Activated T-helper 1 cell treated with anti-CD3 and anti-CD28 coated beads, Interleukin-12 subunit alpha, Interleukin-12 subunit beta, Interleukin-2, Interleukin-4 antibody, amounts not matched to agents 30 ng/mL and 10 ng/mL and 1 ng/mL, durations not matched to agents 14 hours and 24 hours and 36 hours (primary cell): ENCODE measurements at regions of chr6 and their contacts with region 1.

Region 1: DNA sequence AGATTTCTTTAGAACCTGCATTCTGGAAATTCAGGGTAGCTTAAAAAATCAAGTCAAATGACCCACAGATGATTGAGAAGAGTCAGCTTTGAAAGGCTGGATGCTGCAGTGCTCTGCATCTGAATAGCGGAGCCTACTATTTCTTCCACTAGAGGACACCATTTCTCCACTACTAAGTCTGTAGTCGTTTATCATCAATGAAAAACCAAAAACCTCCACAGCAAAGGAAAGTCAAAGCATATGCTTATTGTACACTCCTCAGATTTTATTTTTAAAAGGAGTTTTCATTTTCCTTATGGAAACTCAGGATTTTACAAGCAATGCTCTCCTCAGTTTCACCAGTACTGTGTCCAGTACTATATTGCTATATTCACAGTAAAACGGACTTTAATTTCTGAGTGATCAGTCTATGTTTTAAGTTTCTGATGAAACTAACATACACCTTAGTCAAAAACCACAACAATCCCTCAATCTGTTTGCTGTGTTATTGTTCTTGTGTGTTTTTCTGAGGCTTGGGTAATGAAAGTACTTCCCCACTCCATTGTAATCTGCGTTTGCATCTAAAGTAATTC is 50.5 kb upstream of the ENPP5 start:
- DNase-seq: no peak
- H3K4me3 Mint-ChIP-seq: no peak overlapping the region
- H3K27ac Mint-ChIP-seq: no peak overlapping the region
- H3K4me1 Mint-ChIP-seq: peaks cover 11% of the 10 kb centered on the region
- H3K27me3 Mint-ChIP-seq: peaks cover 6% of the 10 kb centered on the region

Region 2: GRCh38 chr6:44494011-44494501 is 1727.3 kb before region 1 on chr6:
- intact Hi-C with region 1: no loop called
- DNase-seq: no peak
- H3K4me3 Mint-ChIP-seq: no peak overlapping the region
- H3K27ac Mint-ChIP-seq: no peak overlapping the region
- H3K4me1 Mint-ChIP-seq: no peaks in the 10 kb centered on the region
- H3K27me3 Mint-ChIP-seq: peaks cover 2% of the 10 kb centered on the region

Region 3: DNA sequence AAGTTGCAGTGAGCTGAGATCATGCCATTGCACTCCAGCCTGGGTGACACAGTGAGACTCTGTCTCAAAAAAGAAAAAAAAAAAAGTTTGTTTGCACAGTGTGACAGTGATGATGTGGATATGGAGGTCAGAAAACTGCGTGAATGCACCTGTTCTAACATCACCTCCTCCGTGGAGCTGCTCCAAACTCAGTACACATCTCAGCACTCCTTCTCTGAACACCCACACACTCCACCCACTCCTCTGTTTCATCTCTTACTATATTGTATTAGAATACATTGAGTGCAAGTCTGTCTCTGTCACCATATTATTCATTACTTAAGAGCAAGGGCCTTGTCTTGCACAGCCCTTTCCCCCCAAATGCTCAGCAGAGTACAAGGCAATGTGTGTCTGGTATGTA is 143.0 kb before region 1 on chr6:
- intact Hi-C with region 1: no loop called
- DNase-seq: no peak
- H3K4me3 Mint-ChIP-seq: no peak overlapping the region
- H3K27ac Mint-ChIP-seq: no peak overlapping the region
- H3K4me1 Mint-ChIP-seq: peaks cover 5% of the 10 kb centered on the region
- H3K27me3 Mint-ChIP-seq: peaks cover 4% of the 10 kb centered on the region

Region 4: DNA sequence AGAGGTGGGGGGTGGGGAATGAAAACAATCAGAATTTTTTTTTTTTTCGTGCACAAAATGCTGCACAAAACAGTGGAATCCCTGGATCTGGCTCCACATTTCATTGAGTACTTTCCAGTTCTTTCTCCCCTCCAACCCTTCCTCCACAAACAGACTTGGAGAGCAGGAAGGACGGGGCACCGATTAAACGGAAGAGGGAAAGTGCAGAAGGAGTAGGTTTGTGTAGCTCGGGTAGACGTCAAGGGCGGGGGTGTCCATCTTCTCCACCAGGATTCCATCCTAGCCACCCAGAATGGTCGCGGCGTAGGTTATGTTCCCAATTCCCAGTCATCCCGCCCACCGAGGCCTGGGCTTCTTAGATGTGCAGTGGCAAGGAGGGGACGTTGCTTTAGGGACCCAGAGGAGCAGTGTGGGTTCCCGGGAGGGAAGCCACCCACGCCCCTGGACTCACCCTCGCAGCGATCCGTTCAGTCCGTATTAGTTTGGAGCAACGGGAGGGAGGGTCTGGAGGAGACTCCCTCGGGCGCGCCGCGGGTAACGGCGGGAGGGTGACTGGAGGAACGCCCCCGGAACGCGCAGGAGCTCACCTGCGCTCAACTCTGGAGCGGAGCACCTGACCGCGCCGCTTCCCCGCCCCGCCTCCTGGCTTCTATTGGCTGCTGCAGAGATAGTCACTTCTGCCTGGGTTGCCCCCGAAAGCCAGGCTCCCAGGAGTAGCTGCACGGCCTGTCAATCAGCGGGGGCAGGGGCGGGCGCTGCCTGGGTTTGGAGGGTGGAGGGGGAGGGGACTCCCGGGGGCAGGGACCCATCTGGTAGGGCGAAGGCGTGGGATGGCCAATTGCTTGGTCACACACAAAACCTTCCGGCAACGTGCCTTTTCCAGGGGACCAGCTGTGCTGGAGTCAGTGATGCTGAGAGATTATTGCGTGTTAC is 50.7 kb before region 1 on chr6 and contains the start of gene ENPP5:
- intact Hi-C with region 1: loop called (anchors 1 kb)
- DNase-seq: no peak
- H3K4me3 Mint-ChIP-seq: peak within 1 kb of the TSS; percentile 67
- H3K27ac Mint-ChIP-seq: no peak within 1 kb of the TSS
- H3K4me1 Mint-ChIP-seq: peaks cover 27% of the 10 kb centered on the region
- H3K27me3 Mint-ChIP-seq: peaks cover 71% of the 10 kb centered on the region
- total RNA-seq, gene ENPP5: not detected in 2 replicates

Region 5: GRCh38 chr6:46199387-46199786 is 21.9 kb before region 1 on chr6:
- intact Hi-C with region 1: no loop called
- DNase-seq: no peak
- H3K4me3 Mint-ChIP-seq: no peak overlapping the region
- H3K27ac Mint-ChIP-seq: no peak overlapping the region
- H3K4me1 Mint-ChIP-seq: no peaks in the 10 kb centered on the region
- H3K27me3 Mint-ChIP-seq: peaks cover 9% of the 10 kb centered on the region

Region 6: DNA sequence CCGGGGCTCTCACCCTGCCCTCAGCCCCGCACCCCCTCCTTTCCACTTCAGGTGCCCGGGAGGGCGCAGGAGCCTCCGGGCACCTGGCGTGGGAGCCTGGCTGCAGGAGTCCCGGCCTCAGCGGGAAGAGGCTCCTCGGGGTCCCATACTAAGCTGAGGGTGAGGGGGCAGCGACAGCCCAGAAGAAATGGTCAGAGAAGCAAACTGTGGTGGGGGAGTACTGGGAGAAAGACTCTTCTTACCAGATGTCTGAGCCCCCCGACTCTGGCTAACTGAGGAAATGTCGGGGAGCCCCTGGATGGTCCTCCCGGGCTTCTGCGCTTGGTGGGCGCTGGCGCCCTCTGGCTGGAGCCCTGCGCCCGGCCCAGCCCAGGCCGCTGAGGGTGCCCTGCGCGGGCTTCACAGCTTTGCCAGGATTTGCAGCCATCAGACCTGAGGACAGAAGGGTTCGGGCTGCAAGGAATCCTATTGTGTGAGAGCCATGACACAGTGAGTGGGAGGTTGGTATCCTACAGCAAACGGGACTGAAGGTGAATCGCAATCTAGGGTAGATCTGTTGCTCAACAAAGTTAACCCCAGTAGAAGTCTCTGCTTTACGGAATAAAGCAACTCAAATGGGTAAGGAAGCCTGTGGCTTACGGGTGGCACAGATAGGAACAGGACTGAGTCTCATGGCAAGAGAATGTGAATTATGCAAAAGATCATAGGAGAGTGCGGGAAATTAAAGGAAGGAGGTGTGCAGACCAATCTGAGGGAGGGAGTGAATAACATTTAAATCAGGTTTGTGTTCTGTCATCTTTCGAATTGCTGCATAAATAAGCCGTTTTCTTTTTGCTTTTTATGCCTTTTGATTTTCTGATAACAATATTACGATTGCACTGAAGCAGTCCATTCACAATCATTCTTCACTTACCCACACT is 270.6 kb after region 1 on chr6:
- intact Hi-C with region 1: loop called (anchors 5 kb)
- DNase-seq: no peak
- H3K4me3 Mint-ChIP-seq: no peak overlapping the region
- H3K27ac Mint-ChIP-seq: no peak overlapping the region
- H3K4me1 Mint-ChIP-seq: no peaks in the 10 kb centered on the region
- H3K27me3 Mint-ChIP-seq: peaks cover 57% of the 10 kb centered on the region

Region 7: GRCh38 chr6:47047479-47048407 is 826.4 kb after region 1 on chr6:
- intact Hi-C with region 1: loop called (anchors 2 kb)
- DNase-seq: peak; percentile 2
- H3K4me3 Mint-ChIP-seq: no peak overlapping the region
- H3K27ac Mint-ChIP-seq: no peak overlapping the region
- H3K4me1 Mint-ChIP-seq: peaks cover 5% of the 10 kb centered on the region
- H3K27me3 Mint-ChIP-seq: peaks cover 3% of the 10 kb centered on the region